ENCODE measurements at regions of chr4 and their contacts with region 1.

Region 1: DNA sequence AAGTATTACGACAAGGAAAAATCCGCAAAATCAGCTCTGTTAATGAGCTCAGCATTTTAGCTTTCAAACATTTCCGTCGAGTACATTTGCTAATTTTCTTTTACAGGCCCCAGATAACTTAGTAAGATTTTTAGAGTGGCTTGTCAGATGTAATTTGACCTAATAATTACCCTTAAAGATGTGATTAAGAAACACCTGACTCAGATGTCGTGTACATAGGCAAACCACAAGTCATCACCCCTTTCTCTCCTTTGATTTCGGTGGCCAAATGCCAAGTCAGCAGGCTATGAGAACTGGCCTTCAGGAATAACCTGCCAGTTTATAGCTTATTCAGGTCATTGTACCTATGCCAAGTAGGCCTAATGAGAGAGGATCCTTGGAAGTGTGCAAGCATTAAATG is 369.6 kb downstream of the PCDH7 start:
- DNase-seq: peak; percentile 80
- H3K4me3 ChIP-seq: no peak overlapping the region
- H3K27ac ChIP-seq: peak overlapping the region; percentile 76
- H3K4me1 ChIP-seq: peaks cover 54% of the 10 kb centered on the region
- H3K27me3 ChIP-seq: no peaks in the 10 kb centered on the region
- CTCF ChIP-seq: no peak
- POLR2A ChIP-seq: no peak

Region 2: GRCh38 chr4:30537456-30537855 is 552.4 kb before region 1 on chr4:
- CTCF ChIA-PET with region 1: no interaction called
- POLR2A ChIA-PET with region 1: no interaction called
- dilution Hi-C with region 1: no loop called
- intact Hi-C with region 1: loop called (anchors 10 kb)
- DNase-seq: peak; percentile 92
- H3K4me3 ChIP-seq: no peak overlapping the region
- H3K27ac ChIP-seq: peak overlapping the region; percentile 65
- H3K4me1 ChIP-seq: peaks cover 25% of the 10 kb centered on the region
- H3K27me3 ChIP-seq: no peaks in the 10 kb centered on the region
- CTCF ChIP-seq: no peak
- POLR2A ChIP-seq: no peak

Region 3: DNA sequence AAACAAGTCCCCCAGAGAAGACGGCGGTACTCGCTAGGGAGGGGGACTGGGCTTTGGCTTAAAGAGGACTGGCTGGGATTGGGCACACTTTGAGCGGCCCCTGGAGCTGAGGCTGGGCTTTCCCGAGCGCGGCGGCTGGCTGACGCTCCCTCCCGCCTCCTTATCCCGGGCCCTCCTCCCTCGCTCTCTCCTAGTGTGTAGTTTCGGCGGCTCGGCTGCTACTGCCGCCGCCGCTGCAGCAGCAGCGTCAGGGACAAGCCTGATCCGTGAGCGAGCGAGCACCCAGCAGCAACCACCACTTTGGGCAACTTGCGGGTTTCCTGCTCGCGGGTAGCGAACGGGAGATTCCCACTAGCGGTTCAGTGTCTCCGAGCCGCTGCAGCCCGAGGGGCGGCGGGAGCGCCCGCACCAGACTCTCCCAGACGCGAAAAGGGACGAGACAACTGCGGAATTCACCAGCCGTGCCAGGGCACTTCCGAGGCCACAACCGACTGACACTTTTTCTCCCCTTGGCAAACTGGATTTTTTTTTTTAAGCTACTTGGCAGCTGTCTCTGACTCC is 370.3 kb before region 1 on chr4:
- CTCF ChIA-PET with region 1: interaction called, 7 read pairs
- POLR2A ChIA-PET with region 1: no interaction called
- dilution Hi-C with region 1: no loop called
- intact Hi-C with region 1: loop called (anchors 1 kb)
- DNase-seq: peak; percentile 80
- H3K4me3 ChIP-seq: peak overlapping the region; percentile 34 to 53 (median 47)
- H3K27ac ChIP-seq: peak overlapping the region; percentile 57
- H3K4me1 ChIP-seq: peaks cover 35% of the 10 kb centered on the region
- H3K27me3 ChIP-seq: no peaks in the 10 kb centered on the region
- CTCF ChIP-seq: no peak
- POLR2A ChIP-seq: peak; percentile 28

Region 4: DNA sequence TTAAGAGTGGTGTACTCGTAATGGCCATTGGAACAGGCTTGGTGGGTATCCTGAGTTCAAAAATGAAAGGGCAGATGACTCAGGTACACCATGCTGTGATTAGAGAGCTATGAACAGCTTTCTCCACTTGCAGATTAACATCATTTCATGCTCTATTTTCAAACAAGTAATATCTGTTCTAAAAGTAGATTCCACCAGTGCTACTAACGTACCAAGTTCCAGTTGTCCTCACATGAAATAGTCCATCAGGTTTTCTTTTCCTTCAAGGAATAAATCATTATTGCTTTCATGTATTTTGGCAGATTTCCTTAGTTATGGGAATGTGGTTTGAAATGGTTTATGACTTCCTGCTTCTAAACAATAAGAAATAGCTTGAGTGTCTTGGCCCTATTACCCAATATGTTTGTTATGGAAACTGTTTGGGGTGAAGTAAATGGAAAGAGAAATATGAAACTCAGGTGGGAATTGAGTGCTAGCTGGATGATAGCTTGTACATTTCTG is 319.7 kb before region 1 on chr4:
- CTCF ChIA-PET with region 1: no interaction called
- POLR2A ChIA-PET with region 1: no interaction called
- dilution Hi-C with region 1: no loop called
- intact Hi-C with region 1: loop called (anchors 5 kb)
- DNase-seq: peak; percentile 93
- H3K4me3 ChIP-seq: no peak overlapping the region
- H3K27ac ChIP-seq: peak overlapping the region; percentile 60
- H3K4me1 ChIP-seq: peaks cover 59% of the 10 kb centered on the region
- H3K27me3 ChIP-seq: no peaks in the 10 kb centered on the region
- CTCF ChIP-seq: no peak
- POLR2A ChIP-seq: peak; percentile 21

Region 5: DNA sequence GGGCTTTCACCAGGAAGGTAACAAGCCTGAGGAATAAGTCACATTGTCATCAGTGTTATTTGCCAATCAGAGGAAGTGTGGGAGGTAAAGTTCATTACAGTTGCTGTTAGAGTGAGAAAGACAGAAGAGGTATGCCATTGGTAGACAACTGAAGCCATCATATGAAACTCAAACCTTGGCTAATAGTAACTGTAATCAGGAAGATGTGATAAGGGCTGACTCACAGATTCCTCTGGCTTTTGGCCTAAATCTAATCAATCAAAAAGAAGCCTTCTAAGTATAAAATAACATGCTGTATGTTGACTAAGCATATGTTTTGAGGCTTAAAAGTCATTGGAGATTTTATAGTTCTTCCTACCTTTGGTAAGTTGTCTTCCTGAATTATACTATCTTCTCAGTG is 126.9 kb before region 1 on chr4:
- CTCF ChIA-PET with region 1: no interaction called
- POLR2A ChIA-PET with region 1: no interaction called
- dilution Hi-C with region 1: no loop called
- intact Hi-C with region 1: loop called (anchors 5 kb)
- DNase-seq: peak; percentile 93
- H3K4me3 ChIP-seq: no peak overlapping the region
- H3K27ac ChIP-seq: no peak overlapping the region
- H3K4me1 ChIP-seq: peaks cover 6% of the 10 kb centered on the region
- H3K27me3 ChIP-seq: no peaks in the 10 kb centered on the region
- CTCF ChIP-seq: no peak
- POLR2A ChIP-seq: no peak

Region 6: GRCh38 chr4:31045724-31046318 is 44.0 kb before region 1 on chr4:
- CTCF ChIA-PET with region 1: interaction called, 14 read pairs
- POLR2A ChIA-PET with region 1: no interaction called
- dilution Hi-C with region 1: no loop called
- intact Hi-C with region 1: no loop called
- DNase-seq: peak; percentile 74
- H3K4me3 ChIP-seq: no peak overlapping the region
- H3K27ac ChIP-seq: no peak overlapping the region
- H3K4me1 ChIP-seq: no peaks in the 10 kb centered on the region
- H3K27me3 ChIP-seq: no peaks in the 10 kb centered on the region
- CTCF ChIP-seq: peak; percentile 40 to 49
- POLR2A ChIP-seq: no peak

Region 7: GRCh38 chr4:31107362-31107761 is 17.5 kb after region 1 on chr4:
- CTCF ChIA-PET with region 1: interaction called, 6 read pairs
- POLR2A ChIA-PET with region 1: no interaction called
- dilution Hi-C with region 1: no loop called
- intact Hi-C with region 1: loop called (anchors 2 kb)
- DNase-seq: peak; percentile 26
- H3K4me3 ChIP-seq: no peak overlapping the region
- H3K27ac ChIP-seq: no peak overlapping the region
- H3K4me1 ChIP-seq: peaks cover 22% of the 10 kb centered on the region
- H3K27me3 ChIP-seq: no peaks in the 10 kb centered on the region
- CTCF ChIP-seq: no peak
- POLR2A ChIP-seq: no peak